OCI-LY7 (cell line): ENCODE measurements at regions of chr12 and their contacts with region 1.

Region 1: GRCh38 chr12:89524541-89525285 is at the start of gene GALNT4:
- DNase-seq: peak; percentile 86
- H3K4me3 ChIP-seq: peak within 1 kb of the TSS; percentile 94
- H3K27ac ChIP-seq: peak within 1 kb of the TSS; percentile 77
- H3K4me1 ChIP-seq: peaks cover 31% of the 10 kb centered on the region
- CTCF ChIP-seq: peak; percentile 75
- total RNA-seq, gene GALNT4: 2.1 and 3.8 TPM in 2 replicates

Region 2: GRCh38 chr12:88141770-88142609 is 1382.7 kb before region 1 on chr12 and contains the starts of genes CEP290 and TMTC3:
- CTCF ChIA-PET with region 1: no interaction called
- POLR2A ChIA-PET with region 1: interaction called, 3 read pairs
- intact Hi-C with region 1: loop called (anchors 5 kb)
- DNase-seq: peak; percentile 98
- H3K4me3 ChIP-seq: peak within 1 kb of the TSS; percentile 84
- H3K27ac ChIP-seq: peak within 1 kb of the TSS; percentile 36
- H3K4me1 ChIP-seq: peaks cover 33% of the 10 kb centered on the region
- CTCF ChIP-seq: no peak
- total RNA-seq, gene CEP290: 12.6 and 27.5 TPM in 2 replicates
- total RNA-seq, gene TMTC3: 5.5 and 6.6 TPM in 2 replicates

Region 3: DNA sequence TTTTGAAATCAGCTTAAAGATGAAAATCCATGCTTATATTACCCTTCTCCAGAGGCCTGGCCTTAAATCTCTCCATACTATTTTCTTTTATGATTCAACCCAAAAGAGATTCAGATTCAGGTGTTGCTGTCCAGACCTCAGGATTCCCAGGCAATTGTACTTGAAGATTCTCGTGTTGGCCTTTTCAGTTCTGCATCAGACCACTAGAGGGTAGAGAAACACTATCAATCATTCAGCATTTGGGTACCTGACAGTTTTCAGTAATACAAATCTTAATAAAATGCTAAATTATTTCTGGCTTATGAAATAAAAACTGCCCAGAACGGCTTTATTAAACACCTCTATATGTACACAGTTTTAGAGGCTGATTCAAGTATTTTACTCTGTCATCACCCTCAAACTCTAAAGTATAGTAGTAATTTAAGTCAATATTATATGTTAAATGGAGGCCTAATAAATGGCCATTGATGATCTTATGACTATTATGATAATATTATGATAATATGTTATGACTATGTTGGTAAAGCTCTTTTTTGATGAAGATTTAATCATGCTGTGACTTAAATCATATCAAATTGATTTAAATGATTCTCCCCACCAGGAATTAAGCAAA is 473.5 kb before region 1 on chr12:
- CTCF ChIA-PET with region 1: no interaction called
- POLR2A ChIA-PET with region 1: no interaction called
- intact Hi-C with region 1: loop called (anchors 2 kb)
- DNase-seq: peak; percentile 47
- H3K4me3 ChIP-seq: no peak overlapping the region
- H3K27ac ChIP-seq: no peak overlapping the region
- H3K4me1 ChIP-seq: no peaks in the 10 kb centered on the region
- CTCF ChIP-seq: peak; percentile 86

Region 4: GRCh38 chr12:89345830-89346740 is 178.6 kb before region 1 on chr12:
- CTCF ChIA-PET with region 1: interaction called, 3 read pairs
- POLR2A ChIA-PET with region 1: no interaction called
- intact Hi-C with region 1: loop called (anchors 5 kb)
- DNase-seq: peak; percentile 94
- H3K4me3 ChIP-seq: peak overlapping the region; percentile 52
- H3K27ac ChIP-seq: peak overlapping the region; percentile 77
- H3K4me1 ChIP-seq: peaks cover 57% of the 10 kb centered on the region
- CTCF ChIP-seq: no peak

Region 5: DNA sequence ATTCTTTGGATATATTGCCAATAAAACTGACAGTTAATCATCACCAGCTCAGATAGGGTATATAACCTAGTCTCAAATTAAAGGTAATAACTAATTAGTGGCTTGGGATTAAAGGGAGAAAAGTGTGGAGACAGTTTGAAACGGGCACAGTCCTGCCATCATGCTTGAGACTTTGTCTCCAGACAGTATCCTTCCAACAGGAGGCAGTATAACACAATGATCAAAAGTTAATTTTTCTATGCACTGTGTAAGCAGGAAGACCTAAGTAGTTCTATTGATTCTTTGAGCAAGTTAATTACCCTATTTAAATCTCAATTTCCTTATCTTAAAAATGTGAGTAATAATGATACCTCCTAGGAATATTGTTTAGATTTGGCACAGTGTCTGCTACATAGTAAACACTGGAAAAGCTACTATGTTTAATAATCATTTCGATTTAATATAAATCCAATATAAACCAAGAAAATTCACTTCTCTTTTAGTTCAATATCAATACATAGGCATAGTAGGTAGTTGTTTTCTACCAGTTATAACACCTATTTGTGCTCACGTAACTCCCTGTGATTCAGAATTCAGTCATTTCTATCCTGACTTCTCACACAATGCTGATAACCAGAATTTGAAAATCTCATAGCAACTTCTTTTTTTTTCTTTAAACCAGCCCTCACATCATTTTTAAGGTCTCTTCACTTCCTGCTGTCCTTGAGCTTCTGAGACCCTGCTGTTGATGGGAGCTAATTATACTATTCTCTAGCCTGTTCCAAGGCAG is 53.8 kb before region 1 on chr12:
- CTCF ChIA-PET with region 1: interaction called, 8 read pairs
- POLR2A ChIA-PET with region 1: interaction called, 4 read pairs
- intact Hi-C with region 1: loop called (anchors 1 kb)
- DNase-seq: peak; percentile 48
- H3K4me3 ChIP-seq: no peak overlapping the region
- H3K27ac ChIP-seq: no peak overlapping the region
- H3K4me1 ChIP-seq: peaks cover 6% of the 10 kb centered on the region
- CTCF ChIP-seq: peak; percentile 83